Right cardiac atrium (tissue), 5 donors: ENCODE measurements at regions of chr1 and their contacts with region 1.

Region 1: DNA sequence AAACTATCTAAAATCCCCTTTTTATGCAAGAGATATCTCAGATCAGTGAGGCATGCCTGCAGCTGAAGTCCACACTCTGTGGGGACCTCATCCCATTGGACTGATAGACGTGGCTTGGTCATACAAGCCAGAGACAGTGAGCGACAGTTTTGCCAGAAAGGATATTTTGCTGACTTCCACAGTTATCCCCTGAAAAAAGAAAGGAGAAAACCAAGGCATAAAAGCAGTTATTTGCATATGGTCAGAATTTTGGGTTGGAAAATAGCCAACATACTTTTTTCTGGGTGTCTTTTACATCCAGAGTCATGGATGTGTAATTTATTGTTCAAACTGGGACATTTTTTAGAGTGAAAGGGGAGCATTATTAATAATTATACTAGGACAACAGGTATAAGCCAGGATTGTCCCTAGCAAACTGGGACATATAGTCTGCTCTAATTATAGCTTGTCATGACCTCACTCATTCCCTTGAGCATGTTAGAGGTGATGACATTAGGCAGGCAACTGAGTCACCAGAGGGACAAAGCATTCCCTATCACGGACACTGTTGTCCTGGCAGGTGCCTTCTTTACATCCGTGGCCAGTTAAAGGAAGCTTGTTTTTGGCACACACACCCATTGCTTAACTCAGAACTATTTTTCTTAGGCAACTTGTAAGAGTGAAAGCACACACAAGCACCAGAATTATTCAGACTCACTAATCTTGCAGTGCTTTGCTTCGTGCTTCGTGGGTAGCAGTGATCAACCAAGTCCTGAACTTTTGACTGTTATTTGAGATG is 65.5 kb downstream of the PRRX1 start:
- DNase-seq: peak in 1 of 3 donors; percentile 28
- ATAC-seq: peak; percentile 79 to 87
- H3K4me3 ChIP-seq: no peak overlapping the region
- H3K27ac ChIP-seq: peak overlapping the region; percentile 63
- H3K4me1 ChIP-seq: peaks cover 11% of the 10 kb centered on the region
- H3K27me3 ChIP-seq: no peaks in the 10 kb centered on the region

Region 2: GRCh38 chr1:170670802-170671628 is 58.4 kb before region 1 on chr1:
- intact Hi-C with region 1: loop called in 1 of 4 experiments (anchors 10 kb)
- DNase-seq: peak; percentile 63 to 85 (median 84)
- ATAC-seq: peak; percentile 63 to 64
- H3K4me3 ChIP-seq: peak overlapping the region; percentile 16
- H3K27ac ChIP-seq: no peak overlapping the region
- H3K4me1 ChIP-seq: no peaks in the 10 kb centered on the region
- H3K27me3 ChIP-seq: no peaks in the 10 kb centered on the region

Region 3: GRCh38 chr1:170685166-170685565 is 44.2 kb before region 1 on chr1:
- intact Hi-C with region 1: loop called in 1 of 4 experiments (anchors 10 kb)
- DNase-seq: no peak
- ATAC-seq: no peak
- H3K4me3 ChIP-seq: no peak overlapping the region
- H3K27ac ChIP-seq: no peak overlapping the region
- H3K4me1 ChIP-seq: no peaks in the 10 kb centered on the region
- H3K27me3 ChIP-seq: no peaks in the 10 kb centered on the region

Region 4: DNA sequence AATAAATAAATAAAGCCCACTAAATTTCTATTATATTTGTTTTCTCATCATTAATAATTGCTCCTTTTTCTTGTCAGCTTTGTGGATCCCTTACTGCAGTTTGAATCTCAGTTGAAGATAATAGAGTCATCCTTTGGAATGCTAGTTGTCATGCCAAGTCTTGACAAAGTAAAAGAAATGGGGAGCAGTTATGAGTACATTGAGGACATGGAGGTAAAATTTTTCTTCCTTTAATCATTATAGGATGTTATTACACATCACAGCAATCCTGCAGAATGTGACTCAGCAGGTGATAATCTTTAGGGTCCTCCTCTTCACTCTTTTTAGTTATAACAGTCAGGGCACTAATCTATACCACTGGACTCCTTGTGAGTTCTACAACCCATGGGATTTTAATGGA is 230.0 kb after region 1 on chr1:
- intact Hi-C with region 1: no loop called
- DNase-seq: no peak
- ATAC-seq: no peak
- H3K4me3 ChIP-seq: no peak overlapping the region
- H3K27ac ChIP-seq: no peak overlapping the region
- H3K4me1 ChIP-seq: no peaks in the 10 kb centered on the region
- H3K27me3 ChIP-seq: no peaks in the 10 kb centered on the region